Heart right ventricle (tissue), 16 donors: ENCODE measurements at regions of chr7 and their contacts with region 1.

Region 1: DNA sequence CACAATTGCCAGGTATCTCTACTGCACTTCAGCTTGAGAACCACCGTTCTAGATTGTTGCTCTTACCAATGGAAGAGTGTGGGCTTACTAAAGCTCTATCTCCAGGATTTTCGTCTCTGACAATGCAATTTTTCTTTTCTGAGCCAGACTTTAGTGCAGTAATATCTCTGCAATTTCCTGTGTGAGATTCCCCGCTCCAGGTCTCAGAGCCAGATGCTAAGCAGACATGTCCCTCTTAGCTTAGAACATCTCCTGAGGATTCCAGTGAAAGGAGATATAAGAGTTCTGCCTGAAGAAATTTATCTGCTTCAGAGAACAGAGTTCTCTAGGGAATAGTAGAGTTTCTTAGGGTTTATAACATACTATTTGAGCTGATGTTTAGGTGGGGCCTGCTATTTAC is 82.0 kb downstream of the SND1 start:
- DNase-seq: no peak
- ATAC-seq: no peak
- H3K4me3 ChIP-seq: no peak overlapping the region
- H3K27ac ChIP-seq: no peak overlapping the region
- H3K4me1 ChIP-seq: peaks cover 0 to 12% (median 9%) of the 10 kb centered on the region in 9 donors
- H3K27me3 ChIP-seq: no peaks in the 10 kb centered on the region
- CTCF ChIP-seq: no peak

Region 2: DNA sequence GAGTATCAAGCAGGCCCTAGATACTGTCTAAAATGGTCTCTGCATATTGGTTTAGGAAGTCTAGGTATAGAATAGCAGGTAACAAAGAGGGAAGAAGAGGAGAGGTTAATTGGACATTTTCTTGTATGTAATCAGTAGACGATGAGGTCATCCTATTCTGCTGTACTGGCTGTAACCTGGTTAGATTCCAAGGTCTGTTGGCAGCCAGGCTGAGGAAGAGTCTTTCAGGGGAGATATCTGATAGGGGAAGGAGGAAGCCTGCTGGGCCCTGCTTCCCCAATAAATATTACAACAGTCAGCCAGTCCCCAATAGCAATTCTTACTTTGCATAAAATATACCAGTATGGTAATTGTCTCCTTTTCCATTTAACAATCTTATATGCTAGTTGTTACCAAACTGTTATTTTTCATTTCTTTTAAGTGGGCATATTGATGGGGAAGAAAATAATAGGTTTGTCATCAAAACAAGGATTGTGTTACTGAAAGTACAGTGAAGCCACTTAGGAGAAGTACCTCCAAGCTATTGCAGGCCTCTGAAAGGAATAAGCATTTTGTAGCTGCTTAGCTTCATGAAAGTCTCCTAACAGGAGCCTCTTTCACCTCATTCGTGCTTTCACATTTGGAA is 110.8 kb after region 1 on chr7:
- intact Hi-C with region 1: loop called in 1 of 10 experiments (anchors 10 kb)
- DNase-seq: peak; percentile 18 to 27
- ATAC-seq: peak; percentile 51 to 88 (median 80)
- H3K4me3 ChIP-seq: no peak overlapping the region
- H3K27ac ChIP-seq: peak overlapping the region in 3 of 10 donors; percentile 26 to 37 (median 27)
- H3K4me1 ChIP-seq: peaks cover 0 to 30% (median 20%) of the 10 kb centered on the region in 9 donors
- H3K27me3 ChIP-seq: no peaks in the 10 kb centered on the region
- CTCF ChIP-seq: no peak